Endothelial cell of umbilical vein (primary cell): ENCODE measurements at regions of chr4 and their contacts with region 1.

Region 1: DNA sequence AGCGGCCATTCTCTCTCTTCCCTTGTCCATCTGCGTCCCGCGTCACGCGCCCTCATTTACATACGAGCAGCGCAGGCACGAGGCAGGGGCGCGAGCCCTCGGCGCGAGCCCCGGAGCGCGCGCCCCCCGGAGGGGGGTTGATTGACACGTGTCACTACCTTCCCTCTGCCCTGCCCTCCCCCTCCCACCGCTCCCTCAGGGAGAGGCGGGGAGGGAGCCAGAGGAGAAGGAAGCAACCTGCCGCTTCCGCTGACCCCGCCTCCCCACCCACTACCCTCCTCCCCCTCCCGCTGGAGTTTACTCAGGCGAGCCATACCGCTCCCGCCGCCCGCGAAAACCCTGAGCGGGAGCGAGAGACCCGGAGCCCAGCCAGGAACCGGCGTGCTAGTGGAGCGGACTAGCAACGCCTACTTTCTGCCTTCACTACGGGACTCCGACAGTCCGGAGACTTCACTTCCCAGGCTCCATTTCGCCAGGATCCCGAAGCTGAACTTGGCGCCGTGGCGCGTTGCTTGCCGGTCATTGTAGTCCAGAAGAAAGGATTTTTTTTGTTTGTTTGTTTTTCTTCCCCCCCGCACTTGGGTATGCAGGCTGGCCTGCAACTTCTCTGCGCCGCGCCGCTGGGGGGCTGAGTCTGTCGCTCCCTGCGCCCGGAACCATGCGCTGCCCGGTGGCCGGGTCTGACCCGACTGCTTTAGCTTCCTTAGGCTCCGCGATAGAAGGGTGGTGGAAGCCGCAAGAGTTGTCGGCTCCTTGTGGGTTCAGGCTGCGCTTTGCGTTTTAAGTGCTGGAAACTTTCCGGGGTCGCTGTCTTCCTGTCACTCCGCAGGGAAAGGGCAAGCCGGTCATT is at the start of gene LCORL:
- DNase-seq: peak; percentile 97
- H3K4me3 ChIP-seq: peak within 1 kb of the TSS; percentile 86
- H3K27ac ChIP-seq: peak within 1 kb of the TSS; percentile 85
- H3K4me1 ChIP-seq: peaks cover 6% of the 10 kb centered on the region
- H3K27me3 ChIP-seq: peaks cover 1 to 5% of the 10 kb centered on the region in 2 experiments
- CTCF ChIP-seq: no peak
- POLR2A ChIP-seq: no peak
- total RNA-seq, gene LCORL: 17.9 and 23.9 TPM in 2 replicates

Region 2: GRCh38 chr4:17614416-17615299 is 407.3 kb before region 1 on chr4 and contains the start of gene MED28:
- CTCF ChIA-PET with region 1: no interaction called
- POLR2A ChIA-PET with region 1: no interaction called
- dilution Hi-C with region 1: no loop called
- intact Hi-C with region 1: loop called (anchors 10 kb)
- DNase-seq: peak; percentile 91
- H3K4me3 ChIP-seq: peak within 1 kb of the TSS; percentile 72 to 100 (median 92)
- H3K27ac ChIP-seq: peak within 1 kb of the TSS; percentile 82
- H3K4me1 ChIP-seq: peaks cover 17% of the 10 kb centered on the region
- H3K27me3 ChIP-seq: no peaks in the 10 kb centered on the region
- CTCF ChIP-seq: peak in 1 of 2 donors; percentile 13
- POLR2A ChIP-seq: peak; percentile 90
- total RNA-seq, gene MED28: 41.2 and 49.1 TPM in 2 replicates

Region 3: DNA sequence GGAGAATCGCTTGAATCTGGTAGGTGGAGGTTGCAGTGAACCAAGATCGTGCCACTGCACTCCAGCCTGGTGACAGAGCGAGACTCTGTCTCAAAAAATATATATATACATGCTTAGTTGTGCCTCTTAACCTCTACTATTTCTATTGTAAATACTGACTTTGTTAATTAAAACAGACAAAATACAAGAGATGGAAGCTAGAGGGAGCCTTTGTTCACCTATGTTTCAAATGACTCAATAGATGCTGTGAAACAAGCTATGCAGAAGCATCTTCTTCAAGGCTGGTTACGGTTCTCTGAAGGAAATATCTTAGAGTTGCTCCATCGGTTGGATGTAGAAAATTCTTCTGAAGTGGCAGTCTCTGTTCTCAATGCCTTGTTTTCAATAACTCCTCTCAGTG is 204.9 kb before region 1 on chr4:
- CTCF ChIA-PET with region 1: interaction called, 11 read pairs
- POLR2A ChIA-PET with region 1: no interaction called
- dilution Hi-C with region 1: no loop called
- intact Hi-C with region 1: no loop called
- DNase-seq: peak; percentile 75
- H3K4me3 ChIP-seq: no peak overlapping the region
- H3K27ac ChIP-seq: no peak overlapping the region
- H3K4me1 ChIP-seq: peaks cover 23% of the 10 kb centered on the region
- H3K27me3 ChIP-seq: no peaks in the 10 kb centered on the region
- CTCF ChIP-seq: peak; percentile 28 to 33
- POLR2A ChIP-seq: no peak

Region 4: DNA sequence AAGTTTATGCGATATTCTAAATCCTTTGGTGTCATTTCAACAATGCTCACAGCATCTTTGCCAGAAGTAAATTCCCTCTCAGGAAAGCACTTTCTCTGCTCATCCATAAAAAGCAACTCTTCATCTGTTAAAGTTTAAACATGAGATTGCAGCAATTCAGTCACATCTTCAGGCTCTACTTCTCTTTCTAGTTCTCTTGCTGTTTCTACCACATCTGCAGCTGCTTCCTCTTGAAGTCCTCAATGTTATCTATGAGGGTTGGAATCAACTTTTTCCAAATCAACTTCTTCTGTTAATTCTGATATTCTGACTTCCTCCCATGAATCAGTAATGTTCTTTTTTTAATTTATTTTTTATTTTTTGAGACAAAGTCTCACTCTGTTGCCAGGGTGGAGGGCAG is 101.3 kb before region 1 on chr4:
- CTCF ChIA-PET with region 1: no interaction called
- POLR2A ChIA-PET with region 1: no interaction called
- dilution Hi-C with region 1: no loop called
- intact Hi-C with region 1: no loop called
- DNase-seq: no peak
- H3K4me3 ChIP-seq: no peak overlapping the region
- H3K27ac ChIP-seq: no peak overlapping the region
- H3K4me1 ChIP-seq: no peaks in the 10 kb centered on the region
- H3K27me3 ChIP-seq: no peaks in the 10 kb centered on the region
- CTCF ChIP-seq: no peak
- POLR2A ChIP-seq: no peak

Region 5: DNA sequence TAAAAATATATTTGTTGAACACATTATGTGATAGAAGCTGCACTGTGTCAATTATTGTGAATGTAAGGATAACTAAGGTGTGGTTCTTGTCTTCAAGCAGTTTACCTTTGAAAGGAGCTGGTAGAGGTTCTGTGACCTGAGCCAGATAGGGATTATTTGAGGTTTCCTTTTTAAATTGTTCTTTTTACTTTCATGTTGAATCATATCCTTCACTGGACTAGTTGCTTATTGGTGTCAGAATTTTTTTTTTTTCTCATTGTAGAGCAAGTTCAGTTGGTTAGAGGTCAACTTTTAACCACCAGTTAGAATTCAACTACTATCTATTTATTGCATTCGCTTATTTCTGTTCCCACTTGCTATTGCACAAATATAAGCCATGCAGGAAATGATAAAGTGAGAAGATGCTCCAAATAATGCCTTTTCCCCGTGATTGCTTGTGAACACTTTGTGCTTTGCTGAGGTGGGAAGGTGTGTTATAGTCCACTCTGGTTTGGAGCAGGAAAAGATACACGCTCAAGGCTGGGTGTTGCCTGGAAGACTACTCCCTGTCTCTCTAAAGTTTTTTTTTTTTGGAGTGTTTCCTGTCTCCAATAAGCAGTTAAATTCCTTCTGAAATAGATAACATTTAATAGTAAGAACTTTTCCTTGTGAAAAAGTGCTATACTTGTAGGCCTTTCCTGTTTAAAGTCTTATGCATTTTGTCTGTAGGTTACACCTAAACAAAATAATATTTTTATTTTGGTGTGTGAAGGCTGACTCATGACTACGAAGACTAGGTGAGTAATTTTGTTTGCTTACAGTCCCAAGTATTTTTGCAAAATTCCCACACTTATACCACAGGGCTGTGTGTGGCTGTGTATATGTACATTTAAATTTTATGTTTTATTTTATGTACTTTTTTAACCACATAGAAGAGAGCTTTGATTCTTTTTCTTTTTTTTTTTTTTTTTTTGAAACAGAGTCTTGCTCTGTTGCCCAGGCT is 83.4 kb after region 1 on chr4:
- CTCF ChIA-PET with region 1: no interaction called
- POLR2A ChIA-PET with region 1: interaction called, 3 read pairs
- dilution Hi-C with region 1: no loop called
- intact Hi-C with region 1: loop called (anchors 1 kb)
- DNase-seq: peak; percentile 57
- H3K4me3 ChIP-seq: no peak overlapping the region
- H3K27ac ChIP-seq: peak overlapping the region; percentile 46
- H3K4me1 ChIP-seq: peaks cover 36% of the 10 kb centered on the region
- H3K27me3 ChIP-seq: no peaks in the 10 kb centered on the region
- CTCF ChIP-seq: no peak
- POLR2A ChIP-seq: no peak

Region 6: DNA sequence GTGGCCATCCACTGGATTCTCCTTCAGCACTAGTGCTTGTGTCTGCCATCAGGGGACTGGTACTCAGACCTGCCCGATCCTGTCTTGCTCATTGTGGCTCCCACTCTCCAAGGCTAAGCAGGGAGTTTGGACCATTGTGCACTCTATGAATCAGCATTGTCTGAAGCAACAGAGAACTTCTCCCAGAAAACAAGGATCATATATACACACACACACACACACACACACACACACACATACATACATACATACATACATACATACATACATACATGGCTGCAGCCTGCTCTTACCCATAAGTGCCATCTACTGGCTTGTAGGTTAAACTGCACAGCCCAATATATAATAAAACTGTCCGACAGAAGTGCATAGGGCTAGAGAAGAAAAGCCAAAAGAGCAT is 344.9 kb after region 1 on chr4:
- CTCF ChIA-PET with region 1: no interaction called
- POLR2A ChIA-PET with region 1: no interaction called
- dilution Hi-C with region 1: no loop called
- intact Hi-C with region 1: loop called (anchors 1 kb)
- DNase-seq: peak; percentile 51
- H3K4me3 ChIP-seq: no peak overlapping the region
- H3K27ac ChIP-seq: no peak overlapping the region
- H3K4me1 ChIP-seq: no peaks in the 10 kb centered on the region
- H3K27me3 ChIP-seq: no peaks in the 10 kb centered on the region
- CTCF ChIP-seq: peak; percentile 34 to 52
- POLR2A ChIP-seq: no peak

Region 7: GRCh38 chr4:18568600-18568999 is 546.7 kb after region 1 on chr4:
- CTCF ChIA-PET with region 1: interaction called, 5 read pairs
- POLR2A ChIA-PET with region 1: no interaction called
- dilution Hi-C with region 1: no loop called
- intact Hi-C with region 1: loop called (anchors 2 kb)
- DNase-seq: peak; percentile 78
- H3K4me3 ChIP-seq: no peak overlapping the region
- H3K27ac ChIP-seq: no peak overlapping the region
- H3K4me1 ChIP-seq: peaks cover 24% of the 10 kb centered on the region
- H3K27me3 ChIP-seq: no peaks in the 10 kb centered on the region
- CTCF ChIP-seq: peak in 1 of 2 donors; percentile 30
- POLR2A ChIP-seq: no peak